ENCODE measurements at regions of chr13 and their contacts with region 1.

Region 1: DNA sequence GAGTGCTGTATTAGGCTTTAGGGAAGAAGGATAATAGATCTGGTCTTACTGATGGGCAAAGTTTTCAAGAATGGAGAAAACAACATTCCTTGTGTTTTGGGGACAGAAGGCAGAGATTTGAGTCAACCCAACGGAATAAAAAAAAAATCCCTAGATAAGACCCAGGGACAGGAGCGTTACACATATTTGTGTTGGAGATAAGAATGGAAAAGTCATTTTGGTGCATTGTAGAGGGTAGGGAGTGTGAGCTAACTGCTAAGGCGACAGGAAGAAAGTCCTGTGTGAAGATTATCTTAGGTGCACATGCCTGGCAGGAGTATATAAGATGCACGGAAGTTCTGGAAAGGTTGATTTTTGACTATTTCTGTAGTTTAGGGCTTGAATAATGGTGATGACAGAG is 450.3 kb upstream of the ARGLU1 start:
- DNase-seq: peak in 1 of 2 experiments; percentile 33
- H3K4me3 ChIP-seq: no peak overlapping the region
- H3K4me3 Mint-ChIP-seq: peak overlapping the region; percentile 17
- H3K27ac Mint-ChIP-seq: peak overlapping the region; percentile 21
- H3K4me1 ChIP-seq: peaks cover 32% of the 10 kb centered on the region
- H3K4me1 Mint-ChIP-seq: peaks cover 21% of the 10 kb centered on the region
- H3K27me3 ChIP-seq: no peaks in the 10 kb centered on the region
- H3K27me3 Mint-ChIP-seq: no peaks in the 10 kb centered on the region
- CTCF ChIP-seq: no peak

Region 2: GRCh38 chr13:106612688-106613087 is 405.6 kb before region 1 on chr13:
- CTCF ChIA-PET with region 1: no interaction called
- POLR2A ChIA-PET with region 1: no interaction called
- intact Hi-C with region 1: no loop called
- DNase-seq: no peak
- H3K4me3 ChIP-seq: no peak overlapping the region
- H3K4me3 Mint-ChIP-seq: no peak overlapping the region
- H3K27ac Mint-ChIP-seq: no peak overlapping the region
- H3K4me1 ChIP-seq: peaks cover 4% of the 10 kb centered on the region; the same call in 1 of the 2 replicates
- H3K4me1 Mint-ChIP-seq: no peaks in the 10 kb centered on the region
- H3K27me3 ChIP-seq: no peaks in the 10 kb centered on the region
- H3K27me3 Mint-ChIP-seq: no peaks in the 10 kb centered on the region
- CTCF ChIP-seq: no peak

Region 3: GRCh38 chr13:107006661-107007060 is 11.6 kb before region 1 on chr13:
- CTCF ChIA-PET with region 1: no interaction called
- POLR2A ChIA-PET with region 1: no interaction called
- intact Hi-C with region 1: loop called (anchors 1 kb)
- DNase-seq: no peak
- H3K4me3 ChIP-seq: peak overlapping the region; percentile 1; the same call in 1 of the 2 replicates
- H3K4me3 Mint-ChIP-seq: peak overlapping the region; percentile 62
- H3K27ac Mint-ChIP-seq: peak overlapping the region; percentile 83
- H3K4me1 ChIP-seq: peaks cover 43% of the 10 kb centered on the region
- H3K4me1 Mint-ChIP-seq: peaks cover 43% of the 10 kb centered on the region
- H3K27me3 ChIP-seq: no peaks in the 10 kb centered on the region
- H3K27me3 Mint-ChIP-seq: no peaks in the 10 kb centered on the region
- CTCF ChIP-seq: no peak